Caco-2 (cell line): ENCODE measurements at regions of chrX and their contacts with region 1.

Region 1: GRCh38 chrX:21735038-21735767 is 22.7 kb downstream of the SMPX start:
- DNase-seq: no peak
- H3K4me3 ChIP-seq: no peak overlapping the region
- H3K4me3 Mint-ChIP-seq: peak overlapping the region; percentile 54
- H3K27ac Mint-ChIP-seq: peak overlapping the region; percentile 90
- H3K4me1 ChIP-seq: peaks cover 75% of the 10 kb centered on the region
- H3K4me1 Mint-ChIP-seq: peaks cover 8% of the 10 kb centered on the region
- H3K27me3 ChIP-seq: no peaks in the 10 kb centered on the region
- H3K27me3 Mint-ChIP-seq: no peaks in the 10 kb centered on the region
- CTCF ChIP-seq: no peak

Region 2: GRCh38 chrX:21705225-21705624 is 30.0 kb before region 1 on chrX:
- CTCF ChIA-PET with region 1: no interaction called
- POLR2A ChIA-PET with region 1: no interaction called
- intact Hi-C with region 1: loop called (anchors 1 kb)
- DNase-seq: peak; percentile 52 to 69
- H3K4me3 ChIP-seq: no peak overlapping the region
- H3K4me3 Mint-ChIP-seq: peak overlapping the region; percentile 19
- H3K27ac Mint-ChIP-seq: peak overlapping the region; percentile 79
- H3K4me1 ChIP-seq: peaks cover 23% of the 10 kb centered on the region
- H3K4me1 Mint-ChIP-seq: peaks cover 8% of the 10 kb centered on the region
- H3K27me3 ChIP-seq: no peaks in the 10 kb centered on the region
- H3K27me3 Mint-ChIP-seq: no peaks in the 10 kb centered on the region
- CTCF ChIP-seq: no peak

Region 3: GRCh38 chrX:21831496-21831895 is 96.3 kb after region 1 on chrX:
- CTCF ChIA-PET with region 1: no interaction called
- POLR2A ChIA-PET with region 1: no interaction called
- intact Hi-C with region 1: loop called (anchors 2 kb)
- DNase-seq: peak; percentile 50 to 65
- H3K4me3 ChIP-seq: no peak overlapping the region
- H3K4me3 Mint-ChIP-seq: peak overlapping the region; percentile 45
- H3K27ac Mint-ChIP-seq: no peak overlapping the region
- H3K4me1 ChIP-seq: peaks cover 12% of the 10 kb centered on the region
- H3K4me1 Mint-ChIP-seq: peaks cover 11% of the 10 kb centered on the region
- H3K27me3 ChIP-seq: no peaks in the 10 kb centered on the region
- H3K27me3 Mint-ChIP-seq: no peaks in the 10 kb centered on the region
- CTCF ChIP-seq: no peak

Region 4: GRCh38 chrX:21975812-21976211 is 240.6 kb after region 1 on chrX:
- CTCF ChIA-PET with region 1: no interaction called
- POLR2A ChIA-PET with region 1: no interaction called
- intact Hi-C with region 1: loop called (anchors 1 kb)
- DNase-seq: no peak
- H3K4me3 ChIP-seq: no peak overlapping the region
- H3K4me3 Mint-ChIP-seq: no peak overlapping the region
- H3K27ac Mint-ChIP-seq: no peak overlapping the region
- H3K4me1 ChIP-seq: peaks cover 18% of the 10 kb centered on the region
- H3K4me1 Mint-ChIP-seq: peaks cover 20% of the 10 kb centered on the region
- H3K27me3 ChIP-seq: no peaks in the 10 kb centered on the region
- H3K27me3 Mint-ChIP-seq: no peaks in the 10 kb centered on the region
- CTCF ChIP-seq: peak in 1 of 2 experiments; percentile 28